PC-9 (cell line): ENCODE measurements at regions of chr4 and their contacts with region 1.

Region 1: GRCh38 chr4:102449751-102450352 is 51.3 kb upstream of the NFKB1 start:
- DNase-seq: peak in 1 of 2 experiments; percentile 13
- H3K4me3 ChIP-seq: no peak overlapping the region
- H3K27ac ChIP-seq: no peak overlapping the region
- H3K4me1 ChIP-seq: no peaks in the 10 kb centered on the region
- H3K27me3 ChIP-seq: no peaks in the 10 kb centered on the region
- CTCF ChIP-seq: peak; percentile 63

Region 2: DNA sequence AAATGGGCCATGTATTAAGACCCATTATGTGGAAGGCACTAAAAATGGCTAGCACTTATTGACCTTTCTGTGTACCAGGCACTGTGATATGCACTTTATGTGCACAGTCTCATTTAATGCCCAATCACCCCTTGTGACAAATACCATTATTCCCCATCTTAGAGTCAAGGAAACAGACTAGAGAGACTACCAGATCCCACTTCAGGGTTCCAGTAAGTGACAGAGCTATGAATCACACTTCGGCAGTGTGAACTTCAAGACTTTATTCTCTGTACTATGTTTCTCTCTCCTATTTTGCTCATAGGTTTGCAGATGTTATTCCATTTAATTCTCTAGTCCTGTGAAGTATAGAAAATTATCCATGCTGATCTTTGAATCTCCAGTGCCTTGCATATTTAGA is 158.3 kb after region 1 on chr4:
- CTCF ChIA-PET with region 1: no interaction called
- POLR2A ChIA-PET with region 1: no interaction called
- intact Hi-C with region 1: loop called (anchors 10 kb)
- DNase-seq: no peak
- H3K4me3 ChIP-seq: no peak overlapping the region
- H3K27ac ChIP-seq: no peak overlapping the region
- H3K4me1 ChIP-seq: no peaks in the 10 kb centered on the region
- H3K27me3 ChIP-seq: no peaks in the 10 kb centered on the region
- CTCF ChIP-seq: no peak

Region 3: DNA sequence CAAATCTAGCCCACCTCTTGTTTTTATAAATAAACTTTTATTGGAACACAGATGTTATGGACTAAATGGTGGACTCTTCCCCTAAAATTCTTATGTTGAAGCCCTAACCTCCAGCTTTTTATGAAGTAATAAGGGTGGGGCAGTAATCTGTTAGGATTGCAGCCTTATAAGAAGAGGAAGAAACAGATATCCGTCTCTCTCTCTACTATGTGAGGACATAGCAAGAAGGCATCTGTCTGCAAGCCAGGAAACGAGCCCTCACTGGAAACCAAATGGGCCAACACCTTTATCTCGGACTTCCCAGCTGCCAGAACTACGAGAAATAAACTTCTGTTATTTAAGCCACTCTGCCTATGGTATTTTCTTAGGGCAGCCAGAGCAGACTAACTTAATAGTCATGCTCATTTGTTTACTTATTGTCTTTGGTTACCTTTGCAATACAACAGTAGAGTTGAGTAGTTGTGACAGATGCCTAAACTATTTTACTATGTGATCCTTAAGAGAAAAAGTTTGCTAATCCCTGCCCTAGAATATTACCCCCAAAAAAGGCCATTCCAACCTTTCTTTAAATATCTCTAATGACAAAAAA is 243.5 kb after region 1 on chr4:
- CTCF ChIA-PET with region 1: no interaction called
- POLR2A ChIA-PET with region 1: no interaction called
- intact Hi-C with region 1: loop called (anchors 2 kb)
- DNase-seq: peak in 1 of 2 experiments; percentile 79
- H3K4me3 ChIP-seq: no peak overlapping the region
- H3K27ac ChIP-seq: peak overlapping the region; percentile 50
- H3K4me1 ChIP-seq: peaks cover 31% of the 10 kb centered on the region
- H3K27me3 ChIP-seq: no peaks in the 10 kb centered on the region
- CTCF ChIP-seq: no peak

Region 4: DNA sequence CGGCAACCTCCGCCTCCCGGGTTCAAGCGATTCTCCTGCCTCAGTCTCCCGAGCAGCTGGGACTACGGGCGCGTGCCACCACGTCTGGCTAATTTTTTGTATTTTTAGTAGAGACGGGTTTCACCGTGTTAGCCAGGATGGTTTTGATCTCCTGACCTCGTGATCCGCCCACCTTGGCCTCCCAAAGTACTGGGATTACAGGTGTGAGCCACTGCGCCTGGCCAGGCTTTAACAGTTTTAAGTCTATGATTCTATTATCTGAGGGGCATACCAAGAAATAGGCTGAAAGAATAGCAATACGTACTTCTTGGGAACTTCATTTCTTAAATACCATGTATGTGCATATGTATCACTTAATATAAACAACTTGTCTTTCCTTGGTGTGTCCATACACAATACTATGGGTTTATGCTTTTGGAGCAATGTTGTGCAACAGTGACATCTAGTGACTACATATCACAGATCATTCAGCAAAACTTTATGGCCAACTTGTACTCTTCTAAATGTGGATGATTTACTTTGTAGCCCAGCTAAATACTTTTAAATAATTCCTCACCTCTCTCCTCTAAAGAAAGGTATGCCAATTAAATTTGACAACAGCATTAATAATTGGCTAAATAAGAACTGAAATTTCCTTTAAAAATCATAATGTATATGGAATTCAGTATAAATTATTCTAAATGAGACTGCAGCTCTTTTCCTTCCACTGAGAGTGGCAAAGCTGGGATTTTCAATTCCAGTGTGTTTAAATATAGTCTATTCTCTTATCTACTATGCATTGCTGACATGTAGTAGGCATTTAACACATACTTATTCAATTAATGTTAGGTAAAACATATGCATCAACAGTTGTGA is 559.2 kb after region 1 on chr4:
- CTCF ChIA-PET with region 1: no interaction called
- POLR2A ChIA-PET with region 1: no interaction called
- intact Hi-C with region 1: loop called (anchors 1 kb)
- DNase-seq: peak in 1 of 2 experiments; percentile 52
- H3K4me3 ChIP-seq: no peak overlapping the region
- H3K27ac ChIP-seq: no peak overlapping the region
- H3K4me1 ChIP-seq: peaks cover 10% of the 10 kb centered on the region
- H3K27me3 ChIP-seq: no peaks in the 10 kb centered on the region
- CTCF ChIP-seq: peak; percentile 64

Region 5: GRCh38 chr4:103091601-103092223 is 641.9 kb after region 1 on chr4:
- CTCF ChIA-PET with region 1: no interaction called
- POLR2A ChIA-PET with region 1: no interaction called
- intact Hi-C with region 1: loop called (anchors 5 kb)
- DNase-seq: peak; percentile 17 to 57
- H3K4me3 ChIP-seq: no peak overlapping the region
- H3K27ac ChIP-seq: no peak overlapping the region
- H3K4me1 ChIP-seq: no peaks in the 10 kb centered on the region
- H3K27me3 ChIP-seq: no peaks in the 10 kb centered on the region
- CTCF ChIP-seq: peak; percentile 72